WTC11 (cell line): ENCODE measurements at regions of chr22 and their contacts with region 1.

Region 1: DNA sequence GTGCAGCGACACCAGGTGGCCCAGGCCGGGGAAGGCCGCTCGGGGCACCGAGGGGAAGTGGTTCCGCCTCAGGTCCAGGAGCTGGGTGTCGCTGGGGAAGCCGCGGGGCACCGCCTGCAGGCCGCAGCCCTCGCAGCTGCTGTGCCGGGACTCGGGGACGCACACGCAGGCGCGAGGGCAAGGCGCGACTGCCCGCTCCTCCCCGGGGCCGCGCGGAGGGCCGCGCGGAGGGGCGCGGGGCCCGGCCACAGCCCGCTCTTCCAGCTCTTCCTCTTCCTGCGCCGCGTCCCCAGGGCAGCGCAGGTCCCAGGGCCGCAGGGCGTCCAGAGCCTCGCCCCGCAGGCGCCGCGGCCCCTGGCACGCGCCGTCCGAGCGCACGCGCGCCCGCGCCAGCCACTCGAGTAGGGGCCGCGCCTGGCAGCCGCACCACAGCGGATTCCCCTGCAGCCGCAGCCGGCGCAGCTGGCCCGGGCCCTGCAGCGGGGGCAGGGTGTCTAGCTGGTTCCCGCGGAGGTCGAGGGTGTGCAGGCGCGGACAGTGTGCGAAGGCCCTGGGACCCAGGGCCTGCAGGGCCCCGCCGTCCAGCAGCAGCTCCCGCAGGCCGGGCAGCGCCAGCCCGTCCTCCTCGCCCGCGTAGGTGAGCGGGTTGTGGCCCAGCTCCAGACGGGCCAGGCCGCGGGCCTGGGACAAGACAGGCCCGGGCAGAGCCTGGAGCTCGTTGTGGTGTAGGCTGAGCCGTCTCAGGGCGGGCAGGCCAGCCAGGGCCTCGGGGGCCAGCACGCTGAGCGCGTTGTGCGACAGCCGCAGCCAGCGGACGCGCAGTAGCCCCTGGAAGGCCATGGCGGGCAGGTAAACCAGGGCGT is 2.8 kb downstream of the CHADL start:
- DNase-seq: peak; percentile 93
- ATAC-seq: peak; percentile 47
- H3K4me3 Mint-ChIP-seq: peak overlapping the region; percentile 63; the same call in 1 of the 2 replicates
- H3K27ac Mint-ChIP-seq: no peak overlapping the region
- H3K4me1 Mint-ChIP-seq: peaks cover 16% of the 10 kb centered on the region
- H3K27me3 Mint-ChIP-seq: no peaks in the 10 kb centered on the region; the same call in none of the 2 replicates
- CTCF ChIP-seq: no peak

Region 2: GRCh38 chr22:40922484-40923303 is 315.2 kb before region 1 on chr22:
- CTCF ChIA-PET with region 1: interaction called, 87 read pairs
- POLR2A ChIA-PET with region 1: no interaction called
- DNase-seq: no peak
- ATAC-seq: no peak
- H3K4me3 Mint-ChIP-seq: no peak overlapping the region
- H3K27ac Mint-ChIP-seq: no peak overlapping the region; the same call in 1 of the 2 replicates
- H3K4me1 Mint-ChIP-seq: no peaks in the 10 kb centered on the region
- H3K27me3 Mint-ChIP-seq: no peaks in the 10 kb centered on the region
- CTCF ChIP-seq: peak; percentile 59

Region 3: GRCh38 chr22:40972587-40972986 is 265.4 kb before region 1 on chr22:
- CTCF ChIA-PET with region 1: interaction called, 11 read pairs
- POLR2A ChIA-PET with region 1: no interaction called
- DNase-seq: no peak
- ATAC-seq: no peak
- H3K4me3 Mint-ChIP-seq: no peak overlapping the region
- H3K27ac Mint-ChIP-seq: no peak overlapping the region
- H3K4me1 Mint-ChIP-seq: no peaks in the 10 kb centered on the region
- H3K27me3 Mint-ChIP-seq: no peaks in the 10 kb centered on the region
- CTCF ChIP-seq: no peak

Region 4: DNA sequence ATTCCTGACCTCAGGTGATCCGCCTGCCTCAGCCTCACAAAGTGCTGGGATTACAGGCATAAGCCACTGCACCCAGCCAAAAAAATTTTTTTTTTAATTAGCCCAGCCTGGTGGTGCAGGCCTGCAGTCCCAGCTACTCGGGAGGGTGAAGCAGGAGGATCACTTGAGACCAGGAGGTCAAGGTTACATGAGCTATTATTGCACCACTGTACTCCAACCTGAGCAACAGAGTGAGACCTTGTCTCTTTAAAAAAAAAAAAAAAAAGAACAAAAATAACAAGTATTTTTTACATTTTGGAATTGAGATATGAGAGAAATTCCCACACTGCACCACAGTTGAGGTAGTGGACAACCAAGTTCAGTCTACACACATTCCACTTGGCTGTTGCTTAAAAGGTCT is 46.5 kb before region 1 on chr22:
- CTCF ChIA-PET with region 1: interaction called, 50 read pairs
- POLR2A ChIA-PET with region 1: no interaction called
- DNase-seq: no peak
- ATAC-seq: no peak
- H3K4me3 Mint-ChIP-seq: no peak overlapping the region
- H3K27ac Mint-ChIP-seq: no peak overlapping the region
- H3K4me1 Mint-ChIP-seq: peaks cover 1% of the 10 kb centered on the region
- H3K27me3 Mint-ChIP-seq: peaks cover 15% of the 10 kb centered on the region
- CTCF ChIP-seq: no peak

Region 5: DNA sequence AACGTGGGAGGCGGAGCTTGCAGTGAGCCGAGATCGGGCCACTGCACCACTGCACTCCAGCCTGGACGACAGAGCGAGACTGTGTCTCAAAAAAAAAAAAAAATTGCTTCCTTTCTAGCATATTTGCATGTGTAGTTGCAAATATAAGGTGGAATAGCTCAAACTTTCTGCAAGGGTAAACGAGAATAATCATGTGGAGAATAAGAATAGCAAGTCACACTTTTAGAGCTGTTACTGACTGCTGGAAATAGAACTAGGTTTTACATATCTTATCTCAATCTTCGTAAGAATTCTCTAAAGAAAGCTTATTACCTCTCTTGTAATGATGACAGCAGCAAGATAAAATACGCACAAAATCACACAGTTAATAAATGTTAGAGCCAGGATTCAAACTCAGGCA is 31.2 kb before region 1 on chr22:
- CTCF ChIA-PET with region 1: interaction called, 10 read pairs
- POLR2A ChIA-PET with region 1: no interaction called
- DNase-seq: no peak
- ATAC-seq: no peak
- H3K4me3 Mint-ChIP-seq: peak overlapping the region; percentile 41
- H3K27ac Mint-ChIP-seq: no peak overlapping the region
- H3K4me1 Mint-ChIP-seq: peaks cover 14% of the 10 kb centered on the region
- H3K27me3 Mint-ChIP-seq: peaks cover 13% of the 10 kb centered on the region
- CTCF ChIP-seq: no peak

Region 6: GRCh38 chr22:41368543-41369423 is 130.8 kb after region 1 on chr22:
- CTCF ChIA-PET with region 1: no interaction called
- POLR2A ChIA-PET with region 1: no interaction called
- DNase-seq: no peak
- ATAC-seq: no peak
- H3K4me3 Mint-ChIP-seq: no peak overlapping the region
- H3K27ac Mint-ChIP-seq: no peak overlapping the region
- H3K4me1 Mint-ChIP-seq: peaks cover 12% of the 10 kb centered on the region
- H3K27me3 Mint-ChIP-seq: no peaks in the 10 kb centered on the region
- CTCF ChIP-seq: no peak